Activated T-helper 1 cell treated with anti-CD3 and anti-CD28 coated beads, Interleukin-12 subunit alpha, Interleukin-12 subunit beta, Interleukin-2, Interleukin-4 antibody, amounts not matched to agents 30 ng/mL and 10 ng/mL and 1 ng/mL, durations not matched to agents 14 hours and 24 hours and 36 hours (primary cell): ENCODE measurements at regions of chr19 and their contacts with region 1.

Region 1: DNA sequence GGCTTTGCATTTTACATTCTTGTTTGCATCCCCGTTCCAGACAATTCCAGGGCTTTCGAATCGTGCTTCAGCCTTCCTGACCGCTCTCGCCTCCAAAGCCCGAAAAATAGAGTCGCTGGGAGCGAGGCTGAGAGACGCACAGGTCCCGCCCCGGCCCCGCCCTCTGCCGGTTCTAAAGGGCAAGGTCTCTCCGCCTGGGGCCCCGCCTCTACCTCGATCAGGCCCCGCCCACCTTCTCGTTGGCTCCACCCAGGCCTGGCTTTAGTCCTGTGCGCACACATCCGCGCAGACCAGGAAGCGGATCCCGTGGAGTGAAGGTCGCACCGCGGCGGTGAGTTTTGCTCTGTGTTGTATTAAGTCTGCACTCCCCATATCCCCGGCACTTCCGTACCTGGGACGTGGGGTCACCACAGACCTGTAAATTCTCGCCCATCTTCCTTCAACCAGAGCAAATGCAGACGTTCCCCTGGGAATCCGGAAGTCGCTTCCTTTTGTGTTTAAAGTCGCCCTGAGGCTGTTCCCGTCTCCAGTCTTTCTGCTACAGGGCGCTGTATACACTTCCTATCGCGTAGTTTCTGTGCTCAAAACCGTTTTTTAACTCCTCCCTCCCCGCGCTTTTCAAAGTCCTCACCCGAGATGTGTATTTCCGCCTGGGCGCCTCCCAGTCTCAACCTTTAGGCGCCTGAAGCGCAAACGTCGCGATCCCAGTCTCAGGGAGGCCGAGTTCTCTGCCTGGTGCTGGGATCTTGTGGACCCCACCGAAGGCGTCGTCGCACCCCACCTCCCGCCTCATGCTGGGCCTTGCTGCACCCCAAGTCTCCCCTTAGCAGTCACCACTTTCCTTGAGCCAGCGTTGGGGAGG is at the start of gene ZNF701:
- DNase-seq: peak; percentile 94
- H3K4me3 Mint-ChIP-seq: peak within 1 kb of the TSS; percentile 94
- H3K27ac Mint-ChIP-seq: peak within 1 kb of the TSS; percentile 94
- H3K4me1 Mint-ChIP-seq: peaks cover 20% of the 10 kb centered on the region
- H3K27me3 Mint-ChIP-seq: no peaks in the 10 kb centered on the region
- total RNA-seq, gene ZNF701: 16.0 and 18.3 TPM in 2 replicates

Region 2: DNA sequence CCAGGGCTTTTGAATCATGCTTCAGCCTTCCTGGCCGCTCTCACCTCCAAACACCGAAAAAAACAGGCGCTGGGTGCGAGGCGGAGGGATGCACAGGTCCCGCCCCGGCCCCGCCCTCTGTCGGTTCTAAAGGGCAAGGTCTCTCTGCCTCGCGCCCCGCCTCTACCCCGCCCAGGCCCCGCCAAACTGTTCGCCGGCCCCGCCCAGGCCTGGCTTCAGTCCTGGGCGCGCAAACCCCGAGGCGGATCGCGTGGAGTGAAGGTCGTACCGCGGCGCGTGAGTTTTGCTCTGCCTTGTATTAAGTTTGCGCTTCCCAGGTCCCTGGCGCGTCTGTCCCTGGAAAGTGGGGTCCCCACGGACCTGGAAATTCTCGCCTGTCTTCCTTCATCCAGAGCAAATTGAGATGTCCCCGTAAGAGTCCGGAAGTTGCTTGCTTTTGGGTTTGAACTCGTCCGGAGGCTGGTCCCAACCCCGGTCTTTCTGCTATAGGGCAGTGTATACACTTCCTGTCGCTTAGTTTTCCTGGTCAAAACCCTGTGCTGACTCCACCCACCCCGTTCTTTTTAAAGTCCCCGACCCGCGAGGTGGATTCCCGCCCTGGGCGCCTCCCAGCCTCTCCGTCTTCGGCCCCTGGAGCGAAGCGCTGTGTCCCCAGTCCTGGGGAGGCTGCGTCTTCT is 34.3 kb before region 1 on chr19:
- intact Hi-C with region 1: loop called (anchors 1 kb)
- DNase-seq: peak; percentile 80
- H3K4me3 Mint-ChIP-seq: peak overlapping the region; percentile 84
- H3K27ac Mint-ChIP-seq: peak overlapping the region; percentile 88
- H3K4me1 Mint-ChIP-seq: peaks cover 11% of the 10 kb centered on the region
- H3K27me3 Mint-ChIP-seq: no peaks in the 10 kb centered on the region

Region 3: DNA sequence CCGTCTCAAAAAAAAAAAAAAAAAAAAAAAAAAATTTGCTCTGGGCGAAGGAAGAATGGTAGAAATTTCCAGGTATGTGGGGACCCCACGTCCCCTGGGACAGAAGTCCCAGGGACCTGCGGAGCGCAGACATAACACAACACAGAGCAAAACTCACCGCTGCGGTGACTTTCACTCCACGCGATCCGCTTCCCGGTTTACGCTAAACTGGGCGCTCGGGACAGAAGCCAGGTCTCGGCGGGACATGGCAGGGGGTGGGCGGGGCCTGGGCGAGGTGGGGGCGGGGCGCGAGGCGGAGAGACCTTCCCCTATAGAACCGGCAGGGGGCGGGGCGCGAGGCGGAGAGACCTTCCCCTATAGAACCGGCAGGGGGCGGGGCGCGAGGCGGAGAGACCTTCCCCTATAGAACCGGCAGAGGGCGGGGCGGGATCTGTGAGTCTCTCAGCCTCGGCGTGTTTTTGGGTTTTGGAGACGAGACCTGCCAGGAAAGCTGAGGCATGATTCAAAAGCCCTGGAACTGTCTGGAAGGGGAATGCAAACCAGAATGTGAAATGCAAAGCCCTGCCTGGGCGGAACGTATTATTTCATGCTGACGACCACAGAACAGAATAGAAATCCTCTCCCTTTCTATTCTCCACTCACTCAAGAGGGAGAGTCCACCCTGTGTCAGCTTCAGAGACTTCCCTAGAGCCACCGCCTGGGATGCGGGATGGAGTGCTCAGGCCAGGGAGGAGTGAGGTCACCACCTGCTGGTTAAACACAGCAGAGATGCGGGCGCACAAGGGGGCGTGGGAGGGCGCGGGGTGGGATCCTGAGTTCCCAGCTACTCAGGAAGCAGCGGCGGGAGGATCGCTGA is 423.3 kb after region 1 on chr19:
- intact Hi-C with region 1: loop called (anchors 2 kb)
- DNase-seq: peak; percentile 79
- H3K4me3 Mint-ChIP-seq: peak overlapping the region; percentile 82
- H3K27ac Mint-ChIP-seq: no peak overlapping the region
- H3K4me1 Mint-ChIP-seq: peaks cover 6% of the 10 kb centered on the region
- H3K27me3 Mint-ChIP-seq: peaks cover 4% of the 10 kb centered on the region